Common myeloid progenitor, CD34-positive (primary cell): ENCODE measurements at regions of chr17 and their contacts with region 1.

Region 1: GRCh38 chr17:39244600-39245570 is 19.1 kb upstream of the STAC2 start:
- DNase-seq: peak; percentile 81 to 88 (median 82)
- H3K4me3 ChIP-seq: no peak overlapping the region
- H3K27ac ChIP-seq: no peak overlapping the region
- H3K4me1 ChIP-seq: peaks cover 2 to 12% (median 11%) of the 10 kb centered on the region in 4 experiments
- H3K27me3 ChIP-seq: no peaks in the 10 kb centered on the region

Region 2: DNA sequence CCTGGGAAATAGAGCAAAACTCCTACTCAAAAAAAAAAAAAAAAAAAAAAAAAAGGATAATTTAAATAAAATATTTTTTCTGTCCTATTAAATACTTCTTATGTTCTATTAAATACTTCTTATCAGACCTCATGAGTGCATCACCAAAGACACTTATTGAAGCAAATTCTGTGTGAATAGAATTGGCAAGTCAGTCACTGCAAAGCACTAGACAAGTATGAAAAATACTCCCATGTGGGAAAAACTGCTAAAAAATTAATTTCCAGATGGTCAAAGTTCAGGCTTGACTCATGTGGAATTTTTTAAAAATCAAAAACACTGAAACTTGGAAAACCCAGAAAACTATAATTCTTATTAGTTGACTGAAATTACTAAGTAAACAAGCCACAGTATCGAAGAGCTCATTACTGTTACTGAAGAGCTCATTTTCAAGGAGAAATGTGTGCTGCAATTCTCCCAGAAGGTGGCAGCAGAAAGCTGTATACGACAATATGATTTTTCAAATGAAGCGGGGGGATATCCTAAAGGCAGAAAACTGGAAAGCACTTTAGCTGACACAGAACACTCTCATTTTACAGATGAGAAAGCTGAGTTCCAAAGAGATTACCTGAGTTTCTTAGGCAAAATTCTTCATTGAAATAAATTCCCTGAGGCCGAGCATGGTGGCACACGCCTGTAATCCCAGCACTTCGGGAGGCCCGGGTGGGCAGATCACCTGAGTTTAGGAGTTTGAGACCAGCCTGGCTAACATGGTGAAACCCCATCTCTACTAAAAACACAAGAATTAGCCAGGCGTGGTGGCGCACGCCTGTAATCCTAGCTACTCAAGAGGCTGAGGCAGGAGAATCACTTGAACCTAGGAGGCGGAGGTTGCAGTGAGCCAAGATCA is 261.8 kb before region 1 on chr17:
- CTCF ChIA-PET with region 1: interaction called, 15 read pairs
- POLR2A ChIA-PET with region 1: no interaction called
- DNase-seq: peak; percentile 77 to 88 (median 83)
- H3K4me3 ChIP-seq: no peak overlapping the region
- H3K27ac ChIP-seq: no peak overlapping the region
- H3K4me1 ChIP-seq: no peaks in the 10 kb centered on the region
- H3K27me3 ChIP-seq: peaks cover 0 to 2% (median 0%) of the 10 kb centered on the region in 5 experiments

Region 3: GRCh38 chr17:39110435-39111136 is 134.3 kb before region 1 on chr17:
- CTCF ChIA-PET with region 1: no interaction called
- POLR2A ChIA-PET with region 1: no interaction called
- DNase-seq: no peak
- H3K4me3 ChIP-seq: no peak overlapping the region
- H3K27ac ChIP-seq: no peak overlapping the region
- H3K4me1 ChIP-seq: no peaks in the 10 kb centered on the region
- H3K27me3 ChIP-seq: peaks cover 0 to 48% (median under 1%) of the 10 kb centered on the region in 5 experiments

Region 4: GRCh38 chr17:39132192-39132610 is 112.7 kb before region 1 on chr17:
- CTCF ChIA-PET with region 1: no interaction called
- POLR2A ChIA-PET with region 1: no interaction called
- DNase-seq: no peak
- H3K4me3 ChIP-seq: no peak overlapping the region
- H3K27ac ChIP-seq: no peak overlapping the region
- H3K4me1 ChIP-seq: no peaks in the 10 kb centered on the region
- H3K27me3 ChIP-seq: peaks cover 0 to 15% (median 2%) of the 10 kb centered on the region in 5 experiments

Region 5: DNA sequence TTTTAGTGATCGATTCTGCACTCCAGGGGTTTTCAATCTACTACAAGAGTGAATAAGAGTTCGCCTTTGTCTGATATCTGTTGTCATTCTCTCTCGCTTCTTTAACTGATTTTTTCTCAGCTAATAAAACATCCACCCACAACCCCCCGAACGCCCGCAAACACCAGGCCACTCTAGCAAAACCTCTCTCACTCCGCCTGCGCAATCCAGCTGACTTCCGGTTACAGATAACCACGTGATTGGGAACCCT is 45.1 kb before region 1 on chr17:
- CTCF ChIA-PET with region 1: interaction called, 425 read pairs
- POLR2A ChIA-PET with region 1: interaction called, 3 read pairs
- DNase-seq: peak; percentile 95 to 98 (median 98)
- H3K4me3 ChIP-seq: peak overlapping the region; percentile 50 to 100 (median 89)
- H3K27ac ChIP-seq: peak overlapping the region; percentile 100
- H3K4me1 ChIP-seq: peaks cover 7 to 66% (median 55%) of the 10 kb centered on the region in 4 experiments
- H3K27me3 ChIP-seq: no peaks in the 10 kb centered on the region

Region 6: DNA sequence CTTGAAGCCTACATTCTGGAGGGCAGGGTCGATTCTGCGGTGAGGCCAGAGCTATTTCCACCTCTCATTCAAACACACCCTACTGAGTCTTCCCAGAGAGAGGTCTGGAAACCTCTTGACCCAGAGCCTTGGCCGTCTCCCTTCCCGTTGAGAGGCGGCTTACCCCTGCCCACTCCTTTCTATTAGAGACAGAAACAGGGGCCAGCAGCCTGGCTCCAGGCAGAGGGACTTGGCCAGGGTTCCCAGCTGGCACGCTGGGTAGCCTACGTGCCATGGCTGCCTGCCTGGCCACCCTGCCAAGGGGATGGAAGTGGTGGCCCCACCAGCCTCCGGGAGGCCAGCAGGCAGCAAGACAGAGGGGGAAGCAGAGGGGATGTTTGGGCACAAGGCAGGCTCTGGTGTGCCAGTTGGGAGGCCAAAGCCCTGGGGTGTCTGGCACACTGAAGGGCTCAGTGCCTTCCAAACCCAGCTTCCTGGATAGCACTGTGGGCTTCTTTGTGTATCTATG is 25.2 kb before region 1 on chr17:
- CTCF ChIA-PET with region 1: interaction called, 14 read pairs
- POLR2A ChIA-PET with region 1: no interaction called
- DNase-seq: no peak
- H3K4me3 ChIP-seq: no peak overlapping the region
- H3K27ac ChIP-seq: no peak overlapping the region
- H3K4me1 ChIP-seq: peaks cover 0 to 7% (median 4%) of the 10 kb centered on the region in 4 experiments
- H3K27me3 ChIP-seq: peaks cover 0 to 57% (median 29%) of the 10 kb centered on the region in 5 experiments

Region 7: DNA sequence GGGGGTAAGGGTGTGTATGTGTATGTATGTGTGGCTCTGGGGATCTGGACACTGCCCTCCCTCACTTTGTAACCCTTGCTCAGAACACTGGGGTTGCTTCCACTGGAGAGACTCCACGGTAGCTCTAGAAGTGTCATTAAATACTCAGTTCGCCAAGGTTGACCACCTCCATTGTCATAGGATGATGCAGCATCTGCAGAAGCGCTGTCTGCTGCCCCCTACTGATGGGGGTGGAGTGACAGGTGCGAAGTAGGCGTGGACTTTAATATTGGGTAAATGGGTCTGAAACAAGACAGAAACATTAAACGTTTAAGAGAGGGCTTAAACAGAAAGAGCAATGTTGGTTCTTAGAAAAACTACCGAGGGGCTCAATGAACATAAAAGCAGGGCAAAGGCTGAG is 16.4 kb after region 1 on chr17:
- CTCF ChIA-PET with region 1: interaction called, 15 read pairs
- POLR2A ChIA-PET with region 1: no interaction called
- DNase-seq: peak in 2 of 3 donors; percentile 41 to 46
- H3K4me3 ChIP-seq: no peak overlapping the region
- H3K27ac ChIP-seq: no peak overlapping the region
- H3K4me1 ChIP-seq: no peaks in the 10 kb centered on the region
- H3K27me3 ChIP-seq: no peaks in the 10 kb centered on the region